Activated CD4-positive, alpha-beta T cell treated with anti-CD3 and anti-CD28 coated beads for 36 hours (primary cell): ENCODE measurements at regions of chr6 and their contacts with region 1.

Region 1: GRCh38 chr6:75601304-75602245 is at the start of gene SENP6:
- DNase-seq: peak; percentile 81
- ATAC-seq: peak; percentile 72
- H3K4me3 Mint-ChIP-seq: peak within 1 kb of the TSS; percentile 88
- H3K27ac Mint-ChIP-seq: peak within 1 kb of the TSS; percentile 99
- H3K4me1 Mint-ChIP-seq: peaks cover 55% of the 10 kb centered on the region
- H3K27me3 Mint-ChIP-seq: no peaks in the 10 kb centered on the region
- total RNA-seq, gene SENP6: 69.5 to 75.1 TPM

Region 2: GRCh38 chr6:75243333-75244062 is 358.1 kb before region 1 on chr6 and contains the start of gene COX7A2:
- CTCF ChIA-PET with region 1: no interaction called
- POLR2A ChIA-PET with region 1: interaction called, 3 read pairs
- intact Hi-C with region 1: loop called (anchors 1 to 5 kb)
- DNase-seq: peak; percentile 91
- ATAC-seq: peak; percentile 97
- H3K4me3 Mint-ChIP-seq: peak within 1 kb of the TSS; percentile 91
- H3K27ac Mint-ChIP-seq: peak within 1 kb of the TSS; percentile 95
- H3K4me1 Mint-ChIP-seq: peaks cover 35% of the 10 kb centered on the region
- H3K27me3 Mint-ChIP-seq: peaks cover 12% of the 10 kb centered on the region
- total RNA-seq, gene COX7A2: 468 to 520 TPM

Region 3: GRCh38 chr6:75611702-75612375 is 10.3 kb after region 1 on chr6:
- CTCF ChIA-PET with region 1: interaction called, 10 read pairs
- POLR2A ChIA-PET with region 1: interaction called, 17 read pairs
- intact Hi-C with region 1: loop called (anchors 1 kb)
- DNase-seq: peak; percentile 78
- ATAC-seq: peak; percentile 89
- H3K4me3 Mint-ChIP-seq: peak overlapping the region; percentile 44
- H3K27ac Mint-ChIP-seq: peak overlapping the region; percentile 72
- H3K4me1 Mint-ChIP-seq: peaks cover 92% of the 10 kb centered on the region
- H3K27me3 Mint-ChIP-seq: no peaks in the 10 kb centered on the region

Region 4: DNA sequence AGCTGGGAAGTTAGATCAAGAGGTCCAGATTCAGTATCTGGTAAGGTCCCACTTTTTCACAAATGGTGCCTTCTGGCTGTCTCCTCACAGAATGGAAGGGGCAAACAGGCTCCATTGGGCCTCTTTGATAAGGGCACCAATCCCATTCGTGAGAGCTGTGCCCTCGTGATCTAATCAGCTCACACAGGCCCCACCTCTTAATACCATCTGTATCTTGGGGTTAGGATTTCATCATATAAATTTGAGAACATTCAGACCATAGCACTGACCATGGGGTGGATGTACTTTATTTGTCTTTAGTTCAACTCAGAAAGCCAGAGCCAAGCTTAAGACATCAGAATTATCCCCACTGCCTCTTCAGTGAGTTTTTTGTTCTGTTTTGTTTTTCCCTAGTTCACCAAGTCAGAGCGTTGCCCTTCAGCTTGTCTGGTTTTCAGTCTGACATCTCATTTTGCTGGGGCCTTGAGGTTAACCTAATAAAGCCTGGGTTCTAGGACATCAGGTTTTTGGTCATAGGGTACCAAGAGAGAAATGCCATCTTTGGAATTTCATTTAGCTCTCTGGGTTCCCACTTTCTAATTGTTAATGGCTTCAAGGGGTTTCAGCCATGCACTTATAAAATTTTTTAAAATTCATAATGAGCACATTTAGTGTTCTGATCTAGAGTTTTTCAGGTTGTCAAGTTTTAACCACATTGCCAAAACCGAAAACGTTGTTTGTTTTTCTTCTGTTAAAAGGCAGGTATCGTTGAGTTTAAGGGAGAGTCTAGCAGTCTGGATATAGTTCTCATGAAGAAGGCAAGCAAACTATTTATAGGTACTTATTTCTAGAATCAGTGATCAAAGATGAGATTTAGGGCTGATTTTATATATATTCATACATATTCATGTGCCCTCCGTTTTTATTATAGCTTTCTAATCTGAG is 19.1 kb after region 1 on chr6:
- CTCF ChIA-PET with region 1: interaction called, 14 read pairs
- POLR2A ChIA-PET with region 1: no interaction called
- intact Hi-C with region 1: no loop called
- DNase-seq: no peak
- ATAC-seq: peak; percentile 42
- H3K4me3 Mint-ChIP-seq: no peak overlapping the region
- H3K27ac Mint-ChIP-seq: peak overlapping the region; percentile 55
- H3K4me1 Mint-ChIP-seq: peaks cover 47% of the 10 kb centered on the region
- H3K27me3 Mint-ChIP-seq: no peaks in the 10 kb centered on the region